Motor neuron (in vitro differentiated cells): ENCODE measurements at regions of chr3 and their contacts with region 1.

Region 1: DNA sequence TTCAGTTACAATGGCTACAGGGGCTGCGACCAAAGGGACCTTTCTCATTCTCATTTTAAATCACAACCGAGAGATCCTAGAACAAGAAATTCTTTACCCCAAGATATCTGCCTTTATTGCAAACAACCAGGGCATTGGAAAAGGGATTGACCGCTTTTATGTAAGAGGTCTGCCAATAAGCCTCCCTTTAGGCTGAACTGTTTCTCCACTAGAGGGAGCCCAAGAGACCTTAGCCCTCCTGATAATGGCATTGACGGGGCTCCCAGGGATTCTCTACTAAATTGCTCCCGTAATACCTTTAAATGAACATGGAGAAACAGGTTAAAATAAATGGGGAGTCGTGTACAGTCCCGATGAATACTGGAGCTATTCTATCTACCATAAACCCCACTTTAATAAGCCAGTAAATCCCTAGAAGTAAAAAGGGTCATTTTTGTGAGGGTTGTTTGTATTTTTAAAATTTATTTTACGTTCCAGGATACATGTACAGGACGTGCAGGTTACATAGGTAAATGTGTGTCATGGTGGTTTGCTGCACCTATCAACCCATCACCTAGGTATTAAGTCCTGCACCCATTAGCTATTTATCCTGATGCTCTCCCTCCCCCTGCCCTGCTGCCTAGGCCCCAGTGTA is 7.5 kb upstream of the IGSF10 start:
- ATAC-seq: peak in 3 of 8 experiments; percentile 64 to 78 (median 66)
- H3K4me3 ChIP-seq: no peak overlapping the region
- H3K27ac ChIP-seq: no peak overlapping the region
- H3K4me1 ChIP-seq: no peaks in the 10 kb centered on the region

Region 2: GRCh38 chr3:151210676-151211381 is 257.6 kb before region 1 on chr3:
- in situ Hi-C with region 1: no loop called
- ATAC-seq: peak in 3 of 8 experiments; percentile 18 to 92 (median 35)
- H3K4me3 ChIP-seq: no peak overlapping the region
- H3K27ac ChIP-seq: no peak overlapping the region
- H3K4me1 ChIP-seq: no peaks in the 10 kb centered on the region

Region 3: GRCh38 chr3:151350656-151351618 is 117.5 kb before region 1 on chr3:
- in situ Hi-C with region 1: no loop called
- ATAC-seq: no peak
- H3K4me3 ChIP-seq: no peak overlapping the region
- H3K27ac ChIP-seq: no peak overlapping the region
- H3K4me1 ChIP-seq: no peaks in the 10 kb centered on the region

Region 4: GRCh38 chr3:151630938-151631441 is 162.6 kb after region 1 on chr3:
- in situ Hi-C with region 1: loop called in 1 of 9 experiments (anchors 25 kb)
- ATAC-seq: peak in 5 of 8 experiments; percentile 21 to 62 (median 45)
- H3K4me3 ChIP-seq: no peak overlapping the region
- H3K27ac ChIP-seq: no peak overlapping the region
- H3K4me1 ChIP-seq: peaks cover 4 to 9% of the 10 kb centered on the region in 2 donors

Region 5: GRCh38 chr3:151660885-151661284 is 192.5 kb after region 1 on chr3:
- in situ Hi-C with region 1: loop called in 1 of 9 experiments (anchors 25 kb)
- ATAC-seq: peak in 1 of 8 experiments; percentile 21
- H3K4me3 ChIP-seq: no peak overlapping the region
- H3K27ac ChIP-seq: no peak overlapping the region
- H3K4me1 ChIP-seq: no peaks in the 10 kb centered on the region